Activated naive CD8-positive, alpha-beta T cell treated with anti-CD3 and anti-CD28 coated beads, Interleukin-2, amount 10 ng/mL, durations not matched to agents 7 days and 5 days (primary cell): ENCODE measurements at regions of chr16 and their contacts with region 1.

Region 1: DNA sequence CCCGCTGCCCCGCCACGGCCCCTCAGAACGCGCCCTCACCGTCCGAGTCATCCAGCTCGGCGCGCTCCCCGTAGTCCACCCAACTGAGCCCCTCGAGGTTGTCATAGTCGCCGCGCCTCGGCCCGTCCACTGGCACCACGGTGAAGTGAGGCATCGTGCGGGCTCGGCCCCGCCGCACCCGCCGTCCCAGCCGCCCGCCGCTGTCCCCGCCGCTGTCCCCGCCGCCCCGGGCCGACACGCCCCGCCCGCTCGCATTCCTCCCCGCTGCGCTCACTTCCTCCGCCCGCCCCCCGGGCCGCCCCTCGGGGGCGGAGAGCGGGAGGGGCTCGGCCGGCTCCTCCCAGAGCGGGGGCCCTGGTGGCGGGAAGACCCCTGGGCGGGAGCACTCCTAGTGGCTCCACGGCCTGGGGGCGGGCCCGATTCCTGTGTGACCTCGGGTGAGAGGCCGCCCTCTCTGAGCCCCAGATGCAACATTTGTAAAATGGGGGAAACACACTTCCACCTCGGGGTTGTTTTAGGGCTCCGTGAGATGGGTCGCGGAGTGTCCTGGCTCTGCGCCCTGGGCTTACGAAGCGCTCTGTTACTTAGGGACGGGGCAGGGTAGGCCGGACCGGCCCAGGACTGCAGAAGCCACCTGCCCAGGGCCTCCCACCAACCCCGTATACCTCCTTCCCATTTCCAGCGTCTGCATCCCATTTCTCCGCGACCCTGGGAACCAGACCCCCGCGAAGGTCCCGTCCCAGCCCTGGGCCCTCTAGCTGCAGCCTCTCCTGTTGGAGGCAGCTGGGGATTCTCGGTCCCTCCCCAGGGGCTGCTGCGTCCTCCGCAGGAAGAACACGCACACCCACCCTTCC is at the start of gene SLC12A4:
- DNase-seq: peak; percentile 96
- ATAC-seq: peak; percentile 91
- H3K4me3 Mint-ChIP-seq: peak within 1 kb of the TSS; percentile 100
- H3K27ac Mint-ChIP-seq: peak within 1 kb of the TSS; percentile 99
- H3K4me1 Mint-ChIP-seq: peaks cover 22% of the 10 kb centered on the region
- H3K27me3 Mint-ChIP-seq: no peaks in the 10 kb centered on the region
- total RNA-seq, gene SLC12A4: 43.9 to 48.7 TPM

Region 2: DNA sequence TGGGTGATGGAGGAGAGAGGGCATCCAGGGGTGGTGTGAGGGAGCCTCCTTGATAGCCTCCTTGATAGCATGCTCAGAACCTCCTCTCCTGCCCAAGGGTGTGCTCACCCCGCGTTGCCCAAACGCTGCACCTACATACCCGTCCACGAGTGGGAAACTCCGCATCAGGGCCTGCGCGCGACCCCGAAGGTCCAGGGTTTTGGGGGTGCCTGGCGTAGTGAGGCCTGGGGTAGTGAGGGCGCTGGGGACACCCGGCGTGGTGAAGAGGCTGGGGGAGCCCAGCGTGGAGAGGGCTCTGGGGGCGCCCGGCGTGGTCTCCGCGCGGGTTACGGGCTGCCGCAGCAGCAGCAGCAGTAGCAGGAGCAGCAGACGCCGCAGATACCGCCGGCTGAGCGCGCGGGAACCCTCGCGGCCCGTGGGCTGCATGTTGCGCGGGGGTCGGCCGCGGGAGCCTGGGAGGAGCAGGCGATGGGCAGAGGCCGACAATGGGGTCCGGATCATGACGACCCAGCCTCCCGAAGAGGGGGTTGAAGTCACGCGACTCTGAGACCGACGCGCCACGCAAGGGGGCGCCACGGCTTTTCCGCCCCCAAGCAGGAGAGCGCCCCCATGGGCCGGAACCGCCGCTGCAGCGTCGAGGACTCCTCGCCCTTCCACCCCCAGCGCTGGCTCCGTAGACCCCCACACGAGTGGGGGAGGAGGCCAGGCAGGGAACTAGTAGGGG is 11.5 kb after region 1 on chr16 and contains the start of gene DPEP3:
- POLR2A ChIA-PET with region 1: interaction called, 16 read pairs
- DNase-seq: no peak
- ATAC-seq: no peak
- H3K4me3 Mint-ChIP-seq: no peak within 1 kb of the TSS
- H3K27ac Mint-ChIP-seq: no peak within 1 kb of the TSS
- H3K4me1 Mint-ChIP-seq: peaks cover 20% of the 10 kb centered on the region
- H3K27me3 Mint-ChIP-seq: peaks cover 5% of the 10 kb centered on the region
- total RNA-seq, gene DPEP3: 0.54 to 0.64 TPM